Dorsolateral prefrontal cortex (tissue), 120 donors: ENCODE measurements at regions of chr12 and their contacts with region 1.

Region 1: GRCh38 chr12:40622246-40622838 is 69.9 kb upstream of the CNTN1 start:
- DNase-seq: peak in 8 of 10 donors; percentile 37 to 86 (median 62)
- H3K4me3 ChIP-seq: no peak overlapping the region
- H3K27ac ChIP-seq: no peak overlapping the region
- H3K27me3 ChIP-seq: peaks cover 0 to 3% (median 0%) of the 10 kb centered on the region in 45 donors
- CTCF ChIP-seq: peak; percentile 72 to 97 (median 86)

Region 2: DNA sequence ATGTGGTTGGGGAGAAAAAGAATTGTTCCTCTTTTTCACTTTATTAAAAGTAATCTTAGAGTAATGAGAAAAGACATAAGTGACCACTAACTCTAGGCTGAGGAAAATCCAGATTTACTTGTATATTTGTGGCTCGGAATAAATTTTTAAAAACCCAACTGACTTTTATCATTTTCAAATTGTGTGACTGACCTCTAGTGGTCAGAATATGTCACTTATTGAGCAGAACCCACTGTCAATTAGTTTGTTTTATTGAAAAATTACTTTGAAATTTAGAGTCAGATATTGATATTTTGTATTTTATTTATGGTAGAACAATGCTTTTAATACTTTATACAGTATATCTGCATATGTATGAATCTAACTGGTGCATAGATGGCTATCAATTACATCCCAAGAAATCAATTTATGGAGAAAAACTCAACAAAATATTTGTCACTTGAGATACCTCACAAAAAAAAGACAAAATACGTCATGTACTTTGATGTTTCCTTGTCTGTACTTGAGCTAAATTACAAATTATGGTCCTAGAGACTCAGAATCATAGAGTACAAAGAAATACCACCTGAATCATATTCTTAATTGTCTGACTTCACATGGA is 299.3 kb after region 1 on chr12:
- intact Hi-C with region 1: loop called (anchors 2 to 5 kb)
- DNase-seq: no peak
- H3K4me3 ChIP-seq: no peak overlapping the region
- H3K27ac ChIP-seq: no peak overlapping the region
- H3K27me3 ChIP-seq: no peaks in the 10 kb centered on the region
- CTCF ChIP-seq: peak; percentile 65 to 94 (median 82)